ENCODE measurements at regions of chr6 and their contacts with region 1.

Region 1: GRCh38 chr6:169618526-169619490 is 83.0 kb downstream of the WDR27 start:
- DNase-seq: peak; percentile 59
- H3K4me3 ChIP-seq: no peak overlapping the region
- H3K27ac ChIP-seq: peak overlapping the region; percentile 29
- H3K4me1 ChIP-seq: peaks cover 26% of the 10 kb centered on the region
- H3K27me3 ChIP-seq: no peaks in the 10 kb centered on the region
- CTCF ChIP-seq: no peak

Region 2: DNA sequence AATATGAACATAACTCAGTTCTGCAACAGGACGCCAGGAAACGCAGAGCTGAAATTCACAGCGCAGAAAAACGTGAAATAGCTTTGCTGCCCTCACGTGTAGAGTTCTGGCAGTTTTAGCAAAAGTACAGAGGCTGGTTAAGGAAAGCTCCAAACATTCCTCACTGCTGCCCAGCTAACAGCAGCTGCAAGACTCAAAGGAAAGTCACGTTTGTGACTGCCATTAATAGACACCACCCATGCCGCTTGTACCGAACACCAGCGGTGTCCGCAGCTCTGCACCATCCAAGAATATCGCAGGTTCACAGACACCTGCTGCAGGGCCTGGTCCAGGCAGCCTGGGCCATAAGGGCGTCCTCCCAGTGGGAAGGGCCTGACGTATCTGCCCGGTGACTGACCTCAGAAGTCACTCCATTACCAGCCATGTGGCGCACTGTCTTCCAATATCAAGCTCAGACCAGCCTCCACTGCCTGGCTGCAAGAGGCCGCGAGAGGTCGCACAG is 21.6 kb after region 1 on chr6:
- CTCF ChIA-PET with region 1: no interaction called
- dilution Hi-C with region 1: no loop called
- in situ Hi-C with region 1: no loop called
- intact Hi-C with region 1: no loop called
- DNase-seq: no peak
- H3K4me3 ChIP-seq: no peak overlapping the region
- H3K27ac ChIP-seq: no peak overlapping the region
- H3K4me1 ChIP-seq: no peaks in the 10 kb centered on the region
- H3K27me3 ChIP-seq: no peaks in the 10 kb centered on the region
- CTCF ChIP-seq: no peak

Region 3: GRCh38 chr6:169692516-169692915 is 73.7 kb after region 1 on chr6:
- CTCF ChIA-PET with region 1: no interaction called
- dilution Hi-C with region 1: loop called (anchors 5 kb)
- in situ Hi-C with region 1: no loop called
- intact Hi-C with region 1: no loop called
- DNase-seq: no peak
- H3K4me3 ChIP-seq: no peak overlapping the region
- H3K27ac ChIP-seq: no peak overlapping the region
- H3K4me1 ChIP-seq: peaks cover 31% of the 10 kb centered on the region
- H3K27me3 ChIP-seq: no peaks in the 10 kb centered on the region
- CTCF ChIP-seq: no peak

Region 4: GRCh38 chr6:169859978-169860703 is 241.3 kb after region 1 on chr6:
- CTCF ChIA-PET with region 1: no interaction called
- dilution Hi-C with region 1: no loop called
- in situ Hi-C with region 1: no loop called
- intact Hi-C with region 1: no loop called
- DNase-seq: no peak
- H3K4me3 ChIP-seq: no peak overlapping the region
- H3K27ac ChIP-seq: no peak overlapping the region
- H3K4me1 ChIP-seq: peaks cover 8% of the 10 kb centered on the region
- H3K27me3 ChIP-seq: no peaks in the 10 kb centered on the region
- CTCF ChIP-seq: no peak